Heart left ventricle (tissue), 16 donors: ENCODE measurements at regions of chr20 and their contacts with region 1.

Region 1: DNA sequence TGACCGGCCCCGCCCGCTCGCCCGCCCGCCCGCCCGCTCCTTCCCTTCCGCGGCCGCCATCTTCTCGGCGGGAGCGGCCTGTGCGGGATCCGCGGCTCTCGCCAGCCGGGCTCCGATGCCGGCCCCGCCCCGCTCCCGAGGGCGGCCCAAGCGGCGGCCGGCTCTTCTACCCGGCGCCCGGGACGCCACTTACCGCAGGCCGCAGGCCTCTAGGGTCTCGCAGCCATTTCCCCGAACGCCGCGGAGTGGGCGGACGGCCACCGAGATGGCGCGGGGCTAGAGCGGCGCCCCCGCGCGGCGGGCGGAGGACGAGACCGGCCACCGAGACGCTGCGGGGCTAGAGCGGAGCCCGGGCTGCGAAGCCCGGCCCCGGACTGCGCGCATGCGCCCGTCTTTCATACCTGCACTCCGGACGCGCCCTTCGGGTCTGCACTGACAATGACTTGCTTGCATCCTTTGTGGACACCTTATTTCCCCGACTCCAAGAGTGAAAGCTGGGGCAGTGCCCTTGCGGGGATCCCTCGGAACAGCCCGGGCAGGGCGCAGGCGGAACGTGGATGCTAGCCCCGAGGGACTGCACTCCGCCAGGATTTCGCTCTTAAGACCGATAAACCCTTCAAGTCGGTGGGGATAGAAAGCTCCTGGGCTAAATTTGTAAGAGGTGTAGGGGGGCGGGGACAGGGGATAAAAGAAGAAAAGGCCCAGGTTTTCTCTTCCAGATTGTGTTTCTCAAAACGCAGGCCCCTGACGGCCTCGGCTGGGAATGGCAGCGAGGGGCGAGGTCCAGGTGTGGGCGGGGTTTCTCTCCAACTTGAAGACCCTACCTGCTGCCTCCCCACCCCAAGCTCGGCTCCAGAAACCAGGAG is at the start of gene DIDO1:
- DNase-seq: peak; percentile 90 to 95 (median 93)
- ATAC-seq: peak; percentile 79 to 94 (median 88)
- H3K4me3 ChIP-seq: peak within 1 kb of the TSS; percentile 72 to 98 (median 94)
- H3K27ac ChIP-seq: peak within 1 kb of the TSS; percentile 95 to 99 (median 98)
- H3K4me1 ChIP-seq: peaks cover 12 to 80% (median 63%) of the 10 kb centered on the region in 12 donors
- H3K27me3 ChIP-seq: no peaks in the 10 kb centered on the region
- CTCF ChIP-seq: peak in 11 of 12 donors; percentile 69 to 95 (median 81)
- POLR2A ChIP-seq: peak in 1 of 2 donors; percentile 64
- total RNA-seq, gene DIDO1: 27.5 to 46.2 (median 38.9) TPM

Region 2: GRCh38 chr20:62861726-62862336 is 64.6 kb before region 1 on chr20 and contains the start of gene TCFL5:
- intact Hi-C with region 1: loop called in 1 of 10 experiments (anchors 5 kb)
- DNase-seq: peak; percentile 89 to 97 (median 90)
- ATAC-seq: peak; percentile 84 to 98 (median 98)
- H3K4me3 ChIP-seq: peak within 1 kb of the TSS in 11 of 12 donors; percentile 14 to 66 (median 50)
- H3K27ac ChIP-seq: peak within 1 kb of the TSS in 6 of 12 donors; percentile 32 to 72 (median 42)
- H3K4me1 ChIP-seq: peaks cover 0 to 21% (median 12%) of the 10 kb centered on the region in 12 donors
- H3K27me3 ChIP-seq: no peaks in the 10 kb centered on the region
- CTCF ChIP-seq: no peak
- POLR2A ChIP-seq: peak in 1 of 2 donors; percentile 20
- total RNA-seq, gene TCFL5: 4.5 to 8.2 (median 6.1) TPM

Region 3: DNA sequence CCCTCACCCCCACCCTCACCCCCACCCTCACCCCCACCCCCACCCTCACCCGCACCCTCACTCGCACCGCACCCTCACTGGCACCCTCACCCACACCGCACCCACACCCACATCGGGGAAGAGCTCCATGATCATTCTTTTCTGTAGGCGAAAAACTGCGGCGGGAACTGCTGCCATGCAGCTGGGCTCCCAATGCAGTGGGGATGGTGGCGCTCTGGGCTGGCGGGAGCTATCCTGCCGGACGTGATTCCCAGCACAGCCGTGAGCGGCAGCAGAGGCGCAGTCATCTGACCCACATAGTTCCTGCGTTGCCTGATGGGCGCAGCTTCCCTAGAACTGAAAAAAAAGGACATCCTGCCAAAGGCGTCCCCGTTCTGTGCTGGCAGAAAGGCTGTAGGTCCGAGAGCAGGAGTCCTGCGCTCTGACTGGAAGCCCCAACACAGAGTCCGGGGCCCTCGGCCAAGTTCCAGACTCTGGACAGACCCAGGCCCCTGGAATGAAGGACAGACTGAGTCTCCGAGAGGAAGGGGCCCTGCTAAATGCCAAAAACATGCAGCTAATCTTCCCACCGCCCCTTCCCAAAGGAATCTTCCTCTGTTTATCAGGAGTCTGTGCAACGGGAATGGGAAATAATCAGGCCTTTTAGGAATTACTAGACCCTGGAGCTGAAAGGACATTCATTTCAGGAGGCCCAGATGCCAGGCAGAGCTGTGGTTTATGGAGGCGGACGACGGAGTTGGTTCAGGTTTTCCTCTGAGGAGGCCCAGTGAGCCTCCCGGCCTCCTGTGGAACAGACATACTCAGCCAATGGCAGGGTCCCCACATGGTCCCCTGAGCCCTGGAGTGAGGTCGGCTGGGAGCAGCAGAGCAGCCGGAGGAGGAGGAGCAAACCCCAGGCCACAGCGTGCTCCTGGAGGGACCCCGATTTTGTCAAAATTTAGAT is 50.8 kb before region 1 on chr20:
- intact Hi-C with region 1: loop called in 4 of 10 experiments (anchors 5 to 10 kb)
- DNase-seq: peak; percentile 78 to 88 (median 84)
- ATAC-seq: peak; percentile 56 to 91 (median 85)
- H3K4me3 ChIP-seq: peak overlapping the region in 7 of 12 donors; percentile 15 to 36 (median 27)
- H3K27ac ChIP-seq: peak overlapping the region in 11 of 12 donors; percentile 59 to 89 (median 81)
- H3K4me1 ChIP-seq: peaks cover 8 to 34% (median 22%) of the 10 kb centered on the region in 12 donors
- H3K27me3 ChIP-seq: no peaks in the 10 kb centered on the region
- CTCF ChIP-seq: peak in 11 of 12 donors; percentile 12 to 71 (median 46)
- POLR2A ChIP-seq: no peak

Region 4: DNA sequence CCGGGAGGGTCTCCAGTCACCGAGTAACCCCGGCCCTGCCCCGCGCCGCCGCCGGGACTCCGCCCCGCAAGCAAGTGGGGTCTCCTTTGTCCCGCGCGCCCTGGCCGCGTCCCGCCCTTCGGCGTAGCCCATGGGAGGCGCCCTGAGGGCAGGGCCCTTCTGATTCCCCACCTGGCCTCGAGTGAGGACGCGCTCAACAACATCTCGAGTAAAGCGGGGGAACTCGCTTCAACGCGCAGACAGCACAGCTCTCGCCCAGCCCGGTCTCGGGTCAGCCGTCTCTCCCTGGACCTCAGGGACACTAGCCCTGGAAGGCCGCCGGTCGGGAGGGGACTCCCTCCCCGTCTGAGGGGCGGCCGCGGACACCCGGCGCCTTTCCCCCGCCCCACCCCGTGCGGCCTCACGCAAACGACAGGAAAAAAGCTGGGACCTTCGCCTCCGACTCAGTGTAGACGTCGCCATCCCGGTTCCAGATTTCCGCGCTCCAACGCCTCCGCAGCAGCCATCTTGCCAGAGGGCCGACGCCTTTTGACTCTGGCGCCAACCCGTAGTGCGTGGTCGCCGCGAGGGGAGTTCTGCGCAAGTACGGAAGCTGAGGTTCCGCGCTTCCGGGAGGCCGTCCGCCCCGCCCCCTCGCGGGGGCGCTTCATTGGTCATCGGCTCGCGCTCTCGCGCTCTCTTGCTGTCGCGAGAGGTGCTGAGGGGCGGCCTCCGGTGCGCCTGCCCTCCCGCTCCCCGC is 11.1 kb after region 1 on chr20:
- intact Hi-C with region 1: loop called in 1 of 10 experiments (anchors 2 kb)
- DNase-seq: peak; percentile 97 to 99 (median 98)
- ATAC-seq: peak; percentile 95 to 97 (median 96)
- H3K4me3 ChIP-seq: peak overlapping the region; percentile 63 to 99 (median 94)
- H3K27ac ChIP-seq: peak overlapping the region; percentile 87 to 96 (median 92)
- H3K4me1 ChIP-seq: peaks cover 8 to 71% (median 50%) of the 10 kb centered on the region in 12 donors
- H3K27me3 ChIP-seq: no peaks in the 10 kb centered on the region
- CTCF ChIP-seq: peak in 1 of 12 donors; percentile 4
- POLR2A ChIP-seq: peak in 1 of 2 donors; percentile 72

Region 5: DNA sequence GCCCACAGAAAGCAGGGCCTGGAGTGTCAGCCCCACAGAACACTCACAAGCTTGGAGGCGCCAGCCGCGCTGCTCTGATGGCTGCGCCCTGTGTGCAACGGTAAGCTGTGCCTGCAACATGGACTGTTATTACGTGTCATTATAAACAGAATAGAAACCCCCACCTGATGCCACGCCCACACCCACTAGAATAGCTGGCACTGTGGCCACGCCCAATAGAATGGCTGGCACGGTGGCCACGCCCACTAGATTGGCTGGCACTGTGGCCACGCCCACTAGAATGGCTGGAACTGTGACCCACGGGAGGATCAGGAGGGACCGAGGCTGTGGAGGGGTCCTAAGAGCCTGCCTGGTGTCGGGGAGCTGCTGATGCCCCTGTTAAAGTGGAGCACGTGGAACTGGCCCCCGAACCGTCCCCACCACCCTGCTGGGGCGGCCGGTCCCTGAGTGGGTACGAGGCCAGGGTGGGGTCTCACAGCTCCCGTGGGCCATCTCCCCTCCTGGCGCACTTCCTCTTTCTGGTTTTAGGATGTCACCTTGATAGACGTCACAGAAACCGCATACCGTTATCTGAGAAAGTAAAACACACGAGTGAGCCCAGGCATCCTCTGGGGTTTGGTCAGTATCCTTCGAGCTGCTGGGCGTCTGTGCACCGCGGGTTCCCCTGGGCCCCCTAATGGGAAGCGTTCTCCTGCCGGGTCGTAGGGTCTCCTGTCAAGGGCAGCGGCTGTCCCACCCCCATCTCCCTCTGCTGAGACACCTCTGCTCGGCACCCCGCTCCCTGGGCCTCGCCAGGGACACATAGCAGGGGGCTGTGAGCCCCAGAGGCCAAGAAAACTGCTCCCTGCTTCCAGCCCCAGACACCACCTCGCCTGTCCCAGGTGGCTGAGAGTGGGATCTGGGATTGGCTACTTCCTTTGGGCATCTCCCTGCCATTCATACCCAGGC is 51.4 kb after region 1 on chr20:
- intact Hi-C with region 1: no loop called
- DNase-seq: no peak
- ATAC-seq: no peak
- H3K4me3 ChIP-seq: no peak overlapping the region
- H3K27ac ChIP-seq: no peak overlapping the region
- H3K4me1 ChIP-seq: peaks cover 0 to 7% (median 1%) of the 10 kb centered on the region in 12 donors
- H3K27me3 ChIP-seq: peaks cover 38 to 98% (median 66%) of the 10 kb centered on the region in 9 donors
- CTCF ChIP-seq: no peak
- POLR2A ChIP-seq: no peak